MCF 10A (cell line): ENCODE measurements at regions of chr3 and their contacts with region 1.

Region 1: GRCh38 chr3:130411320-130411719 is 65.8 kb downstream of the COL6A5 start:
- DNase-seq: no peak
- H3K4me3 Mint-ChIP-seq: no peak overlapping the region
- H3K27ac Mint-ChIP-seq: no peak overlapping the region
- H3K4me1 Mint-ChIP-seq: no peaks in the 10 kb centered on the region
- H3K27me3 Mint-ChIP-seq: no peaks in the 10 kb centered on the region
- CTCF ChIP-seq: no peak

Region 2: GRCh38 chr3:130442284-130442683 is 31.0 kb after region 1 on chr3:
- CTCF ChIA-PET with region 1: interaction called, 3 read pairs
- POLR2A ChIA-PET with region 1: no interaction called
- intact Hi-C with region 1: loop called (anchors 1 kb)
- DNase-seq: no peak
- H3K4me3 Mint-ChIP-seq: no peak overlapping the region
- H3K27ac Mint-ChIP-seq: no peak overlapping the region
- H3K4me1 Mint-ChIP-seq: no peaks in the 10 kb centered on the region
- H3K27me3 Mint-ChIP-seq: peaks cover 20% of the 10 kb centered on the region
- CTCF ChIP-seq: no peak